Mammary epithelial cell (primary cell): ENCODE measurements at regions of chr2 and their contacts with region 1.

Region 1: GRCh38 chr2:183124222-183124956 is at the start of gene NUP35:
- DNase-seq: peak; percentile 91
- H3K4me3 ChIP-seq: peak within 1 kb of the TSS; percentile 54 to 86 (median 74)
- H3K27ac ChIP-seq: peak within 1 kb of the TSS; percentile 89
- H3K4me1 ChIP-seq: peaks cover 16% of the 10 kb centered on the region
- H3K27me3 ChIP-seq: no peaks in the 10 kb centered on the region
- CTCF ChIP-seq: no peak
- total RNA-seq, gene NUP35: 15.0 to 19.7 TPM

Region 2: DNA sequence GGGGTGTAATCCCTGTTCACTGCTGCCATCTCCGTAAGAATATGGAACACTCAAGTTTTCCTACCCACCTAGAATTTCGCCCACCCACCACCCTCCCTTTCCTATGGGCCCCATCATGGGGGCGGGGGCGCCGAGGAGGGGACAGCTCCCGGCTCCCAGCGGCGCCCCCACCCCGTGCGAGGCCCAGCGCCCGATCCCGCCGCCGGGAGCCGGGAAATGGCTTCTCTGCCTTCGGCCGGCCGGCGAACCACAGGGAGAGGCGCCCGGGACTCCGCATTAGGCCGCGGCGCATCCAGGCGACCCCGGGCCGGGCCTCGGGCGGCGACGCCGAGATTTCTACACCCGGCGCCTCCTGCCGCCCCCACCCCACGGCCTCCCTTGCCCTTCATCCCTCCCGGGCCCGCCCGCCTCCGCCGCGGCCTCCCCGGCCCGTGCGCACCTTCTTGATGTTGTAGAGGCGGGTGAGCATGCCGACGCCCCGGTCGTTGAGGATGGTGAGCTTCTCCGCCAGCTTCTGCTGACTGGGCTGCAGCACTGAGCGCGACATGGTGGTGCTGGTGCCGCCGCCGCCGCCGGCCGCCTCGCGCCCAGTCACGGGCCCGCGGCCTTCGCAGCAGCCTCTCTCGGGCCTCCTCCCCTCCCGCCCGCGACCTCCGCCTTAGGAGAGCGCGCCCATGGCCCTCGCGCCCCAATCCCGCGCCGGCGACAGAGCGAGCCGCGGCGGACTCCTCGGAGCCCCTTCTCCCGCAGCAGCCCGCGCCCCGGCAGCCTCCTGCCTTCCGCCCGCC is 86.6 kb before region 1 on chr2:
- CTCF ChIA-PET with region 1: no interaction called
- dilution Hi-C with region 1: no loop called
- in situ Hi-C with region 1: no loop called
- intact Hi-C with region 1: loop called (anchors 1 kb)
- DNase-seq: peak; percentile 55
- H3K4me3 ChIP-seq: peak overlapping the region; percentile 62 to 99 (median 95)
- H3K27ac ChIP-seq: peak overlapping the region; percentile 95
- H3K4me1 ChIP-seq: peaks cover 13% of the 10 kb centered on the region
- H3K27me3 ChIP-seq: peaks cover 2% of the 10 kb centered on the region
- CTCF ChIP-seq: no peak

Region 3: DNA sequence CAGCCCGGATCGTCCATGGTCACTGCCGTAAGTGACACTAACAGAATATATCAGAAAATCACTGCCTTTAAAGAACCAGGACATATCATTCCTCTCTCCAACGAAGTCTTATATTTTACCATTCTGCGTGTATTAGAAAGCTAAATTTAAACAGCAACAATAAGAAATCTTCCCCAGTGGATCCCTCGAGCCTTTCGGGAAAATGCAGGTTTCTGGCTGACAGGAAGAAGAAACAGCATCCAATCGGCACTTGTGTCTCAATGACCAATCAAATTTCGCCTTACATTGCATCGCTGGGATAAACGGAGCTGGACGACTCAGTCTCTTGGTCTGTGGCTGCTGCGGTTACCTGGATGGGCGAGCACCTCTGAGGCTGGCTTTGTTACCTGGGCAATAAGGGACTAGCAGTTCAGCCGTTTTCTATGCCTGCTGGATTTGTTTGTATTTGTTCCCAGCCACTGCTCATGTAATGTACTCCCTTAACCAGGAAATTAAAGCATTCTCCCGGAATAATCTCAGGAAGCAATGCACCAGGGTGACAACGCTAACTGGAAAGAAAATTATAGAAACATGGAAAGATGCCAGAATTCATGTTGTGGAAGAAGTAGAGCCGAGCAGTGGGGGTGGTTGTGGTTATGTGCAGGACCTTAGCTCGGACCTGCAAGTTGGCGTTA is 45.8 kb before region 1 on chr2 and contains the start of gene DUSP19:
- CTCF ChIA-PET with region 1: no interaction called
- dilution Hi-C with region 1: no loop called
- in situ Hi-C with region 1: no loop called
- intact Hi-C with region 1: loop called (anchors 2 kb)
- DNase-seq: peak; percentile 97
- H3K4me3 ChIP-seq: peak within 1 kb of the TSS; percentile 45 to 53 (median 49)
- H3K27ac ChIP-seq: peak within 1 kb of the TSS; percentile 30
- H3K4me1 ChIP-seq: no peaks in the 10 kb centered on the region
- H3K27me3 ChIP-seq: no peaks in the 10 kb centered on the region
- CTCF ChIP-seq: no peak
- total RNA-seq, gene DUSP19: 1.0 to 1.7 TPM

Region 4: DNA sequence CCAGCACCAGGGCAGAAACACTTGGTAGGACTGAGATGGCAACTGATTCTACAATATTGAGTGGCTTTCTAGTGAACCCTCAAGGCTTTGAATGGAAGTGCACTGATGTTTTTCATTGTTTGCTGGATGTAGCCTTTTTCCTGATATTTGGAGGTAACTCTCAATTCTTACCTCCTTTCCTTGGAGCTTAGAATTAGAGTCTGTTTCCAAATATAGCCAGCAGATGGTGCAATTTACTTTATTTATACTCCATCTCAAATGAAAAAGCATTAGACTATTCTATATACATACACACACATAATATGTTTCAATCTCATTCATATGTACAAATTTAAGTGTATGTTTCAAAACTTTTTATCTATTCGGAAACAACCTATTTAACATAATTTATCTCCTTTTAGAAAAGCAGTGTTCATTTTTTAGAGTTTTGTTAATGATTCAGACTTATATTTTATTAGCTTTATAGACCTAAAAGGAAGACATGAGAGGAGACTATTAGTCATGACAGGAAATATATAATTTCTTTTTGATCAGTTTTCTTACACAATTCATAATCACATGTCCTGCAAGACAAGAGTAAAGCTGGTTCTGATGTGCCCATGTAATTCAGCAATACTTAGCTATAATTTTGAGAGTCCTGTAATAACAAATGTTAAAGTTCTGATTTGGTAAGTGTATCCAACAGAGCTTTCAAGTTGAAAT is 124.6 kb after region 1 on chr2:
- CTCF ChIA-PET with region 1: no interaction called
- dilution Hi-C with region 1: no loop called
- in situ Hi-C with region 1: no loop called
- intact Hi-C with region 1: loop called (anchors 1 kb)
- DNase-seq: peak; percentile 42
- H3K4me3 ChIP-seq: no peak overlapping the region
- H3K27ac ChIP-seq: peak overlapping the region; percentile 91
- H3K4me1 ChIP-seq: peaks cover 25% of the 10 kb centered on the region
- H3K27me3 ChIP-seq: no peaks in the 10 kb centered on the region
- CTCF ChIP-seq: peak; percentile 47 to 53

Region 5: DNA sequence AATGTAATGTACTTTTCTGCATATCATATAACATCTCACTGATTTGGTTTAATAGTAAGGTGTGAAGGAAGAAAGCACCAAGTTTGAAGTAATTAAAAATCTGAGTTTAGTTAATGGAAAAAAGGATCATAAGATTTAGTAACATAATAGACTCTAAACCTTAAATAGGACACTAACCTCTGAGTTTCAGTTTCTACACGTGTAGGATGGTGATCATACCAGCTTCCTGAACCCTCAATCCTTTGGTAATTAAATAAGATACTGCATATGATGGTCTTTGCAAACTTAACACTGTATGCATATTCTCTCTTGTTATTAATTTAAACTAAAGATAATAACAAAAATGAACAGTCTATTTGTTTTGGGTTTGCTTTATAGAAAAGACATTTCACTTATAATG is 216.7 kb after region 1 on chr2:
- CTCF ChIA-PET with region 1: no interaction called
- dilution Hi-C with region 1: no loop called
- in situ Hi-C with region 1: no loop called
- intact Hi-C with region 1: no loop called
- DNase-seq: no peak
- H3K4me3 ChIP-seq: no peak overlapping the region
- H3K27ac ChIP-seq: no peak overlapping the region
- H3K4me1 ChIP-seq: no peaks in the 10 kb centered on the region
- H3K27me3 ChIP-seq: no peaks in the 10 kb centered on the region
- CTCF ChIP-seq: no peak